ENCODE measurements at regions of chr6 and their contacts with region 1.

Region 1: GRCh38 chr6:113858480-113859348 is 1.6 kb downstream of the MARCKS start:
- DNase-seq: peak; percentile 87
- ATAC-seq: peak; percentile 72
- H3K4me3 ChIP-seq: peak overlapping the region; percentile 100
- H3K27ac ChIP-seq: peak overlapping the region; percentile 96
- H3K4me1 ChIP-seq: peaks cover 9% of the 10 kb centered on the region
- H3K27me3 ChIP-seq: no peaks in the 10 kb centered on the region
- CTCF ChIP-seq: peak; percentile 75

Region 2: DNA sequence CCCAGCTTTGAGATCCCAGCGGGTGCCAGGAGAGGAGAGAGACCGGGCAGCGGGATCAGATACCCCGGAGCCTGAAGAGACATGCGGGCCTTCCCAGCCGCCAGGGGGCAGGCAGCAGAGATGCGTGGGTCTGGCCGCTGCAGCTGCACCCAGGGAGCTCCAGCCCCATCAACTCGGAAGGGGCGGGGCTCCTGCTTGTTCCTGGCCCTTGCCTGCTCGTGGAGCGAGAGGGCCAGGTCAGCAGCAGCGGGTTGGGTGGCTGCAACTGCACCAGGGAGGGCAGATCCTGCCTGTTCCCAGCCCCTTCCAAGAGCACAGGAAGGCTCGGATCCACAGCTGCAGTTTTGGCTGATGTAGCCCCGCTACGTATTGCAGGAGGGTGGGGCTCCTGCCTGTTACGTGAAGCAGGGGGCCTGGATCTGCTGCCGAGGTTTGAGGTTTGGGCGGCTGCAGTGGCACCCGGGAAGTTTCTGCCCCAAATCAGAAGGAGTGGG is 978.7 kb before region 1 on chr6:
- CTCF ChIA-PET with region 1: no interaction called
- POLR2A ChIA-PET with region 1: no interaction called
- intact Hi-C with region 1: loop called (anchors 5 kb)
- DNase-seq: no peak
- ATAC-seq: no peak
- H3K4me3 ChIP-seq: no peak overlapping the region
- H3K27ac ChIP-seq: no peak overlapping the region
- H3K4me1 ChIP-seq: peaks cover 13% of the 10 kb centered on the region
- H3K27me3 ChIP-seq: no peaks in the 10 kb centered on the region
- CTCF ChIP-seq: no peak

Region 3: DNA sequence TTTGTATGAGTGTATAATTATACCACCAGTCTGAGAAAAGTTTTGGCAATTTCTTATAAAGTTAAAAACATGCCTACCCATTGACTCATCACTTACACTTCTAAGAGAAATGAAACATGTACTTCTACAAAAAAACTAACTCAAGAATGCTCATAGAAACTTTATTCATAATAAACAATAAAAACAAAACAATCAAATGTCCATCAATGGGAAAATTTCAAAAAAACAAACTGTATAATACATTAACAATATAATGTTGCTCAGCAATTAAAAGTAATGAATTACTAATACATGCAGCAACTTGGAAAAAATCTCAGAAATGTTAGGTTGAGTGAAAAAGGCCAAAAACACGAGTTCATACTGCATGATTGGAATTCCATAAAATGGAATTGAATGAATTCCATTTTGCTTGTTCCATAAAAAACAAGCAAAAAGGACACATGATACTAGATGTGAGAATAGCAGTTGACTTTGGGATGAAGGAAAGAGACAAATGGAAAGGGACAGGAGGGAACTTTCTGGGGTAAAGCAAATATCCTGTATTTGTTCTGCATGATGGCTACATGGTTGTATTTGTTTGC is 785.0 kb before region 1 on chr6:
- CTCF ChIA-PET with region 1: no interaction called
- POLR2A ChIA-PET with region 1: no interaction called
- intact Hi-C with region 1: loop called (anchors 5 kb)
- DNase-seq: peak; percentile 31
- ATAC-seq: peak; percentile 83
- H3K4me3 ChIP-seq: no peak overlapping the region
- H3K27ac ChIP-seq: peak overlapping the region; percentile 52
- H3K4me1 ChIP-seq: peaks cover 16% of the 10 kb centered on the region; the same call in 1 of the 2 replicates
- H3K27me3 ChIP-seq: no peaks in the 10 kb centered on the region
- CTCF ChIP-seq: no peak

Region 4: DNA sequence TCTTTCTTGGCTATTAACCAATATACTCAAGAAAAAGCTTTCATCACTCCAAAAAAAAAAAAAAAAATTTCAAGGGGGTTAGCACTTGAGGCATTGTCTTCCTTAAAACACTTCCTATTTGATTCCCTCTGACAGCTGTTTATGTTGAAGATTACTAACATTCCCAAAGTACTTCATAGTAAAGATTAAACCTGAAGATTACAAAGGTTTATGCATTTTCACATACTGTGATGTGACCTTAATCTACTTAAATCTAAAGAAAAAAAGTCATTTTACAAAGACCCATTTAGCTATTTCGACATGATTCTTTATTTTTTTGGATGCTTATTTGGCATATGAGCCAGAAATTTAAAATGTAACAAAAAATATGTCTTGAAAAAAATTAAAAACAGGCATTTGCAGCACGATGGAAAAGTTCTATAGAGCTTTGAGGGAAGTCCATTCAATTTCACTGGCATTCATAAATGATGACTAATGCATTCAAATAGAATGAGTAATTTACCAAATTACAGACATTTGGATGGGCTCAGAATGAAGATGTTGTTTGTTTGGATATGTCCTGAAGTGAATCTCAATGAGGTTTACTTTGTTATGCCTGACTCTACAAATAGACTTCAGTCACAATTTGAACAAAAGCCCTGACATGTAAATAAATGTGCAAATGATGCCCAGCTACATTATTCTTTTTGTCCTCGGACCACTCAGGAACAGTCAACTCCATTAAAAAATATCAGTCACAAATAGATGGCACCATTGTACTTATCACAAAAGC is 676.2 kb before region 1 on chr6:
- CTCF ChIA-PET with region 1: no interaction called
- POLR2A ChIA-PET with region 1: no interaction called
- intact Hi-C with region 1: loop called (anchors 5 kb)
- DNase-seq: peak; percentile 85
- ATAC-seq: peak; percentile 87
- H3K4me3 ChIP-seq: peak overlapping the region; percentile 20; the same call in 1 of the 2 replicates
- H3K27ac ChIP-seq: peak overlapping the region; percentile 39; the same call in 1 of the 2 replicates
- H3K4me1 ChIP-seq: peaks cover 21% of the 10 kb centered on the region
- H3K27me3 ChIP-seq: no peaks in the 10 kb centered on the region
- CTCF ChIP-seq: no peak; the same call in 1 of the 2 replicates

Region 5: DNA sequence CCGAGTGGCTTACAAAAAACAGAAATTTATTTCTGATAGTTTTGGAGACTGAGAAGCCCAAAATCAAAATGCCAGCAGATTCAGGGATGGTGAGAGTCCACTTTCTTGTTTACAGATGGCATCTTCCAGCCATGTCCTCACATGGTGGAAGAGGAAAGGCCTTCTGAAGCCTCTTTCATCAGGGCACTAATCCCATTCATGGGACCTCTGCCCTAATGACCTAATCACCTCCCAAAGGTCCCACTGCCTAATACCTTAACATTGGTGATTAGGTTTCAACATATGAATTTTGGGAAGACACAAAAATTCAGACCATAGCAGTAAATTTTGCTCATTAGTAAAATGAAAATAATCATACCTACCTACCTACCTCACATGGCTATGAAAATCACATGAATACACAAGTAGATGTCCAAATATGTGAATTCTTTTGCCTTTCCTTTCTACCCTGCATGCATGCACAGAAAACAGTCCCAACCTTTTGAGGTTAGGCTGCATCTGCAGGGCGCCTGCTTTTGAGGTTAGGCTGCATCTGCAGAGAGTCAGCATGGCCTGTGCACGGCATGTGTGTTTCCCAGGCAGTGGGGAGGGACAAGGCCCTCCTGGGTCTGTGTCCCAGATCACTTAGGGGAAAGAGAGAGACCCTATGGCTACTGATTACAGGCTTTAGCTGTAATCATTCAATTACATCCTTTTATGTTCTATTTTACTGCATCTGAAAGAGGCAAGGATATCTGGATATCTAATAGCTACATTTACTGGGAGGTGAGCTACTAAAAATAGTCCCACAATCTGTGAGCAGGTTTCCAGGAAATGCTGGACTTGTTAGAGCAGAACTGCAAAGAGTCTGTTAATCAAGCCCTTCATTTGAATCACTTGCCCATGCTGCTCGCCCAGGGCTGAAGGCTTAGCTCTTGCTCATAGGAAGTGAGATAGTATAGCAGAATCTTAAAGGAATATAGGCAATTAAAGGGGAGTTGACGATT is 499.3 kb before region 1 on chr6:
- CTCF ChIA-PET with region 1: no interaction called
- POLR2A ChIA-PET with region 1: interaction called, 4 read pairs
- intact Hi-C with region 1: loop called (anchors 5 kb)
- DNase-seq: peak; percentile 68
- ATAC-seq: peak; percentile 76
- H3K4me3 ChIP-seq: no peak overlapping the region
- H3K27ac ChIP-seq: peak overlapping the region; percentile 53
- H3K4me1 ChIP-seq: peaks cover 48% of the 10 kb centered on the region
- H3K27me3 ChIP-seq: no peaks in the 10 kb centered on the region
- CTCF ChIP-seq: no peak

Region 6: DNA sequence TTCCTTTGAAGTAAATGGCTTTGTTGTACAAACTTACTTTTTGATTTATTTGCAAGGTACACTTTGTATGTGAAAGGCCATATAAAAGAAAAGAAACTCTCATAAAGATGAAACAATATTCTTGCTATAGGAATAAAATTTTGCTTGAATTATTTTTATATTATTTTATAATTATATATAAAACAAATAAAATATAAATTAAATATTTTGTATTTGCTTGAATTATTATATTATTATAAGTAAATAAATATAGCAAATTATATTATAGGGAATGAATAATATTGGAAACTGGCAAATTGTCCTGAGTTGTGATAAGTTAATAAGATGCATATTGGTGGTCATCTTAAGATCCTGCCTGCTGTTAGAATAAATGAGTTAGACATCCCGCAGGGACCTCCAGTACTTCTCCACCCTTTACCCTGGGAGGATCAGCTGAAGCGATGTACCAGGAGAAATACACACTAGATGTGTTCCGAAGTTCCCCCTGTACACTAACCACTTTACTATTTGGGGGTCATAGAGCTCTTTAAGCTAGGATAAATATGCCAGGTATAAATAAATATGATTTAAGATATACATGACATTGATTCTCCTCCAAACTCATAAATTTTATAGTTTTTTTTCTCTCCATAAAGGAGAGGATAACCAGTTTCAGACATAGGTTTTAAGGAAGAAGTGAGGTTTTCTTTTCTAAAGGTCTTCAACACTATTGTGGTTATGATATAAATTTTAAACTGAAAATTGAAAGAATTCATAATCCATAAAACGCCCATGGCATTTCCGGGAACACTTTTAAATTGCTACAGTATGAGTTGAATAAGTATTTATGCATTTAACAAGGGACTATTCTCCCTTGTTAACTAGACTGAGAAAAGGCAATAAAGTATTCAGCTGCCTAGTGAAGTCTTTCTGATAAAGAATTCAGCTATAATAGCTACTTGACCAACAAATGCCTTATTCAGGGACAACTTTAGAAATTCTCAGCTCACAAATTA is 487.9 kb before region 1 on chr6:
- CTCF ChIA-PET with region 1: no interaction called
- POLR2A ChIA-PET with region 1: no interaction called
- intact Hi-C with region 1: no loop called
- DNase-seq: no peak
- ATAC-seq: no peak
- H3K4me3 ChIP-seq: no peak overlapping the region
- H3K27ac ChIP-seq: no peak overlapping the region
- H3K4me1 ChIP-seq: peaks cover 6% of the 10 kb centered on the region
- H3K27me3 ChIP-seq: no peaks in the 10 kb centered on the region
- CTCF ChIP-seq: no peak

Region 7: GRCh38 chr6:113564371-113565161 is 294.1 kb before region 1 on chr6:
- CTCF ChIA-PET with region 1: no interaction called
- POLR2A ChIA-PET with region 1: no interaction called
- intact Hi-C with region 1: loop called (anchors 10 kb)
- DNase-seq: no peak
- ATAC-seq: no peak
- H3K4me3 ChIP-seq: no peak overlapping the region
- H3K27ac ChIP-seq: no peak overlapping the region
- H3K4me1 ChIP-seq: peaks cover 21% of the 10 kb centered on the region
- H3K27me3 ChIP-seq: no peaks in the 10 kb centered on the region
- CTCF ChIP-seq: no peak

Region 8: DNA sequence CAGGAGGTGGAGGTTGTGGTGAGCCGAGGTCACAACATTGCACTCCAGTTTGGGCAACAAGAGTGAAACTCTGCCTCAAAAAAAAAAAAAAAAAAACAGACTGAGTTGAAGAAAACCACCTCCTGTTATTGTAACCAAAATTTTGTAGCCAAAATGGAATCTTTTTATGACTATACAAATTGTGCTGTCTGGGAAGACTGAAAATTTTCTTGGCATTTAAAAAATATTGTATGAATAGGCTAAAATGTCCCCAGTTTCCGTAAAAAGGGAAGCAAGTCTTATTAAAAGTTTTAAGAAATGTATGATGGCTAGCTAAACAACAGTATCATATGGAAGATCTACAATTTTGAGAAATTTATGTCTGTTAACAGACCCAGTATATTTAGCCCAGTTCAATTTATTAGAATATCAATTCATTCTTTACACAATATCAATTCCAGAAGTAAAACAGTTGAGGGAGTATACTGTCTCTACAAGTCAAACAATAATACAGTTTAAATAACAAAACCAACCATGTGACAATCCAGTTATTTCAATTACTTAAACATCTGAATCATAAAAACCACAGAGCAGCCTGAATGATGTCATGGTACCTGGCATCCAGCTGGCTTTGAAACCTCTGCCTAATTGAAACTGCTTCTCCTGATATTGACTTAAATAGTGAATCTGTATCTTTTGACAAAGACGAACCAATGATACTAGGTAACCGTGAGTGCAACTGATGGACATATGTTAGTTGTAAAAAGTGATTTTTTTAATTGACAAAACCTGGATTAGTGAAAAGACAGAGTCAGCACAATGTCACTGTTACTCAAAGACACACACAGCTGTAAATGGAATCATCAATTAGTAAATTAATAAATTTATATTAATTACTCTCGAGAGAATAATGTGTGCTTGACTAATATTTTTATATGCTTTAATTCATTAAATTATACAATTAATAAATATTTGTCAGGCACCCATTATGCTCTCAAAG is 168.1 kb before region 1 on chr6:
- CTCF ChIA-PET with region 1: no interaction called
- POLR2A ChIA-PET with region 1: no interaction called
- intact Hi-C with region 1: loop called (anchors 2 kb)
- DNase-seq: peak; percentile 80
- ATAC-seq: peak; percentile 76
- H3K4me3 ChIP-seq: no peak overlapping the region
- H3K27ac ChIP-seq: peak overlapping the region; percentile 58
- H3K4me1 ChIP-seq: peaks cover 35% of the 10 kb centered on the region
- H3K27me3 ChIP-seq: no peaks in the 10 kb centered on the region
- CTCF ChIP-seq: no peak

Region 9: GRCh38 chr6:113796038-113796437 is 62.7 kb before region 1 on chr6:
- CTCF ChIA-PET with region 1: no interaction called
- POLR2A ChIA-PET with region 1: no interaction called
- intact Hi-C with region 1: no loop called
- DNase-seq: no peak
- ATAC-seq: no peak
- H3K4me3 ChIP-seq: no peak overlapping the region
- H3K27ac ChIP-seq: no peak overlapping the region
- H3K4me1 ChIP-seq: no peaks in the 10 kb centered on the region
- H3K27me3 ChIP-seq: no peaks in the 10 kb centered on the region
- CTCF ChIP-seq: no peak

Region 10: DNA sequence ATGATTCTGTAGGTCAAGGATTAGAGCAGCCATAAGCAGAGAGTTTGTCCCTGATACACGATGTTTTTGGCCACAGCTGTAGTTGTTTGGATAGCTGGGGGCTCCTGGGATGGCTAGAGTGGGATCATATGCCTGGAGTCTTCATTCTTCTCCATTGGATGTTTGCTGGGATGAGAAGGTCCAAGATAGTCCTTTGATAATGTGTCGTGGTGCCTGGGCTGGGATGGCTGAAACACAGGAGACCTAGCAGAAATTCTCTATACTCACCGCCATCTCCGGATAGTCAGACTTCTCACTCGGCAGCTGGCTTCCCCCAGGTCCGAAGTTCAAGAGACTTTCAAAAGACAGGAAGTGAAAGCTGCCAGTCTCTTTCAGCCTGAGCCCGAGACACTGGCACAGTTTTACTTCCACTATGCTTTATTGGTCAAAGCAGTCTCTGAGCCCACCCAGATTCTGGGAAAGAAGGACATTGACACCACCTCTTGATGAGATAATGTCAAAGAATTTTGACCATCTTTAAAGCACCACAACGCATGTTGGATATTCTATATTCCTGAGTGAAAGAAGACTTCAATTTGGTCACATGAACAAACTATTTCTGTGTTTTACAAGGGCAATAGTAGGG is 14.4 kb after region 1 on chr6:
- CTCF ChIA-PET with region 1: no interaction called
- POLR2A ChIA-PET with region 1: no interaction called
- intact Hi-C with region 1: no loop called
- DNase-seq: no peak
- ATAC-seq: no peak
- H3K4me3 ChIP-seq: no peak overlapping the region
- H3K27ac ChIP-seq: no peak overlapping the region
- H3K4me1 ChIP-seq: 0 out of 2 replicates have a peak, but pooled peaks cover 4% of the 10 kb centered on the region
- H3K27me3 ChIP-seq: no peaks in the 10 kb centered on the region
- CTCF ChIP-seq: no peak

Measured in PC-3 (cell line).